Mammary epithelial cell (primary cell): ENCODE measurements at regions of chr18 and their contacts with region 1.

Region 1: DNA sequence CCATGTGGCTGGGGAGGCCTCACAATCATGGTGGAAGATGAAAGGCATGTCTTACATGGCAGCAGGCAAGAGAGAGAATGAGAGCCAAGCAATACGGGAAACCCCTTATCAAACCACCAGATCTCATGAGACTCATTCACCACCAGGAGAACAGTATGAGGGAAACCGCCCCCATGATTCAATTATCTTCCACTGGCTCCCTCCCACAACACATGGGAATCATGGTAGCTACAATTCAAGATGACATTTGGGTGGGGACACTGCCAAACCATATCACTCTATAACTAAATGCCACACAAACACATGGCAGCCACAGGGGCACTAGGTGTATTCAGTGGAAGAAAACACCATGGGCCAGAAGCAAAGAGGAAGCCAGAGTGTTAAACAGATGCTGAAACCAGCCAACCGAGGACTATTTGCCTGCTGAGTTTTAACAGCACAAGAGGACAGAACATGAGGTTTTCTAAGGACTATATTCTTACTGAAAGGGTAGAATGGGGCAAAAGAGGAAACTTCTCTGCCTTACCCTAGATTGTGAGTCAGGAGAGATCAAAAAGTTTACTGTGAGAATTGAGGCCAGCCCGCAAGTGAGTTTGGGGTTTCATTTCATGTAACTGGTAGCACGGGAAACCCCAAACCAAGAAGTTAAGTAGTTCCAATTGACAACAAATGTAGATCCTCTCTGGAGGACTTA is 49.2 kb downstream of the SIGLEC15 start:
- DNase-seq: peak; percentile 52
- H3K4me3 ChIP-seq: no peak overlapping the region
- H3K27ac ChIP-seq: no peak overlapping the region
- H3K4me1 ChIP-seq: peaks cover 6% of the 10 kb centered on the region
- H3K27me3 ChIP-seq: no peaks in the 10 kb centered on the region
- CTCF ChIP-seq: no peak

Region 2: GRCh38 chr18:45910405-45911023 is 35.9 kb after region 1 on chr18:
- CTCF ChIA-PET with region 1: no interaction called
- dilution Hi-C with region 1: no loop called
- in situ Hi-C with region 1: no loop called
- intact Hi-C with region 1: loop called (anchors 5 kb)
- DNase-seq: peak; percentile 32
- H3K4me3 ChIP-seq: no peak overlapping the region
- H3K27ac ChIP-seq: no peak overlapping the region
- H3K4me1 ChIP-seq: no peaks in the 10 kb centered on the region
- H3K27me3 ChIP-seq: no peaks in the 10 kb centered on the region
- CTCF ChIP-seq: peak; percentile 87 to 96